ENCODE measurements at regions of chr14 and their contacts with region 1.

Region 1: GRCh38 chr14:74109369-74109768 is 24.6 kb downstream of the LIN52 start:
- DNase-seq: no peak
- H3K4me3 ChIP-seq: no peak overlapping the region
- H3K27ac ChIP-seq: no peak overlapping the region
- H3K4me1 ChIP-seq: no peaks in the 10 kb centered on the region
- H3K27me3 ChIP-seq: no peaks in the 10 kb centered on the region
- CTCF ChIP-seq: no peak

Region 2: DNA sequence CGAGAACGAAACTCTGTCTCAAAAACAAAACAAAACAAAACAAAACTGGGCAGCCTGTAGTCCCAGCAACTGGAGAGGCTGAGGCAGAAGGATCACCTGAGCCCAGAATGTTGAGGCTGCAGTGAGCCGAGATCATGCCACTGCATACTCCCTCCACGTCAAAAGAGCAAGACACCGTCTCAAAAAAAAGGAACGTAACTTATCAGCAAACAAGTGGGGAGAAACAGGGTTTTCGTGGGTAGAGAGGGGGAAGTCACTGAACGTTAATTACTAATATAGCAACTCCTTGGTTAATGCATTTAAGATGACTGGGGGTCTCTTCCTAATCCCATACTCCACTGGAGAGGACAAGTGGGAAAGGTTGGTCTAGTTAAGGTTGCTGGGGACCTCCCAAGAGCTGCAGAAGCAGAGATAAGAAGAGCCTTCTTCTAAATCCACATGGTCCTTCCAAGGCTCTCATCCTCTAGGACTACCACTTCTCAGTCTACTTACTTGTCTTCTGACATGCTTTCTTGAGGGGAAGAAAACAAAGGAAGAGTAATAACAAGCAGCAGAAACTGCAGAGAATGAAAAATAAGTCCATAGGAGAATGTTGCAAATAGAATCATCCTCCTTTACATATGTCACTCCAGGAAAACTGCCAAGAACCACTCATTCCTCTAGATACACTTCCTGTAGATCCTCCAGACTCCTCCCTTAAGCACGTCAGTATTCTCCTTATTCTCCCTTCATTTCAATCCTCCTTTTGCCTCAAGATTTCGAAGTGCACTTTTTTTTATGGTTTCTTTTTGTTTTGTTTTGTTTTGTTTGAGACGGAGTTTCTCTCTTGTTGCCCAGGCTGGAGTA is 656.8 kb before region 1 on chr14:
- CTCF ChIA-PET with region 1: no interaction called
- POLR2A ChIA-PET with region 1: no interaction called
- intact Hi-C with region 1: no loop called
- DNase-seq: no peak
- H3K4me3 ChIP-seq: no peak overlapping the region
- H3K27ac ChIP-seq: no peak overlapping the region
- H3K4me1 ChIP-seq: peaks cover 16% of the 10 kb centered on the region
- H3K27me3 ChIP-seq: no peaks in the 10 kb centered on the region
- CTCF ChIP-seq: no peak

Region 3: GRCh38 chr14:73961192-73961591 is 148.2 kb before region 1 on chr14:
- CTCF ChIA-PET with region 1: no interaction called
- POLR2A ChIA-PET with region 1: no interaction called
- intact Hi-C with region 1: no loop called
- DNase-seq: no peak
- H3K4me3 ChIP-seq: no peak overlapping the region
- H3K27ac ChIP-seq: no peak overlapping the region
- H3K4me1 ChIP-seq: no peaks in the 10 kb centered on the region
- H3K27me3 ChIP-seq: no peaks in the 10 kb centered on the region
- CTCF ChIP-seq: no peak

Region 4: DNA sequence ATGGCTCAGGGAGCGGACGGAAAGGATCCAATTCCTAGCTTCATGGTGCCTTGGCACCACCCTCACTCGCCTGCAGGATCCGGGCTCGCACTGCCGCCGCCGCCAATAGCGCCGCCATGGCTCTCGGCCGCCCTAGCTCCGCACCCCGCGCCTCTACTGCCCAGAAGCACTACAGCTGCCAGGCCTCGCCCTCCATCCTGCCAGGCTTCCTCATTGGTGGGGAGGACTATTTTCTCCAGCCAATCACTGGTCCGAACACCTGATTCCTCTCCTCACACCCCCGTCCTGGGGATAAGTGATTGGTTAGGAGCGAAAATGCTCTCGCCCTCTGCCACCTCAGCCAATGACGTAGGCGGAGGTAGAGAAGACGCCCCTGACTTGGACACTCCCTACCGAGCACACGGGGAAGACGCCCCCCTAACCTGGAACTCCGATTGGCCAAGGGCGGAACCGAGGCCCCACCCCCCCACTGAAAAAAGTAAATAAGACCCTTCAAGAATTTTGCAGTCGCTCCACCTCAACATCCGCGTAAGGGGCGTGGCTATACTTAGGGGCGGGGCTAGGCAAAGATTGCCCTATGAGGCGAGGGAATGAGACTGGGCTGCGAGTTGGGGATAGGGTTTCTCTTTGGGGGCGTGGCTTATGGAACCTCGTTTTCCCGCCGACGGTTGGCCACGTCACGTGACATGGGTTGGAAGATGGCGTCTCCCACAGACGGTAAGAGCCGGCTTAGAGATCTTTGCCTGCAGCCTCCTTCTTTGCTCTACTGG is 24.9 kb before region 1 on chr14 and contains the starts of genes ALDH6A1 and LIN52:
- CTCF ChIA-PET with region 1: no interaction called
- POLR2A ChIA-PET with region 1: interaction called, 10 read pairs
- intact Hi-C with region 1: no loop called
- DNase-seq: peak; percentile 100
- H3K4me3 ChIP-seq: peak within 1 kb of the TSS; percentile 80
- H3K27ac ChIP-seq: peak within 1 kb of the TSS; percentile 63
- H3K4me1 ChIP-seq: peaks cover 21% of the 10 kb centered on the region
- H3K27me3 ChIP-seq: no peaks in the 10 kb centered on the region
- CTCF ChIP-seq: 0 out of 2 replicates have a peak, but pooled peaks have one; percentile 28
- total RNA-seq, gene ALDH6A1: 53.1 and 54.5 TPM in 2 replicates
- total RNA-seq, gene LIN52: 18.8 TPM in 2 replicates

Region 5: DNA sequence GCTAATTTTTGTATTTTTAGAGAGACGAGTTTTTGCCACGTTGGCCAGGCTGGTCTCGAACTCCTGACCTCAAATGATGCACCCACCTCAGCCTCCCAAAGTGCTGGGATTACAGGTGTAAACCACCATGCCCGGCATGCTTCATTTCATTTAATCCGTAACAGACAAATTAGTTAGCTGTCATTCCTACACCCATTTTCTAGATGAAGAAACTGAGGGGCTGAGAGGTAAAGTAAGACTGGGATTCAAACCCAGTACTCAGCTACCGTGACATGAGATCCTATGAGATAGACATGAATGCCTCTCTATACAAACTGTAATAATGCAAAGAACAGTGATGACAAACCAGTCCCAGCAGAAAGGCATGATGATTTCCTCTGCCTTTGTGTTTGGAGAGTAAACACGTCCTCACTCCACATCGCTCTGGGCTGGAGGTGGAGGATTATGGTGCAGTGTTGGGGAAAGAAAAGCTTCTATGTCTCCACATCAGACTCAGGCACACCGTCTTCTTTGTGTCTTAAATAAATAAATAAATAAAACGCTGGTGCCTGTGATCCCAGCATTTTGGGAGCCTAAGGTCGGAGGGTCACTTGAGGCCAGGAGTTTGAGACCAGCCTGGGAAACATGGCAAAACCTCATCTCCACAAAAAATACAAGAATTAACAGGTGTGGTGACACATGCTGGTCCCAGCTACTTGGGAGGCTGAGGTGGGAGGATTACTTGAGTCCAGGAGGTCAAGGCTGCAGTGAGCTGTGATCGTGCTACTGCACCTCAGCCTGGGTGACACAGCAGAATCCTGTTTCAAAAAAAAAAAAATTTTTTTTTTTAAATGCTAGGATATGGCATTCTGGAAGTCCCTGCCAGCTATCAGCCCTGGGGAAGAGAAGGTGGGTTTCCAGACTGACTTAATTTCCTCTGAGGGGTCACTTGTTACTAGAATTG is 140.3 kb after region 1 on chr14:
- CTCF ChIA-PET with region 1: interaction called, 8 read pairs
- POLR2A ChIA-PET with region 1: no interaction called
- intact Hi-C with region 1: loop called (anchors 1 kb)
- DNase-seq: no peak
- H3K4me3 ChIP-seq: no peak overlapping the region
- H3K27ac ChIP-seq: no peak overlapping the region
- H3K4me1 ChIP-seq: no peaks in the 10 kb centered on the region
- H3K27me3 ChIP-seq: peaks cover 4% of the 10 kb centered on the region
- CTCF ChIP-seq: no peak

Region 6: GRCh38 chr14:74362361-74362915 is 253.1 kb after region 1 on chr14:
- CTCF ChIA-PET with region 1: no interaction called
- POLR2A ChIA-PET with region 1: no interaction called
- intact Hi-C with region 1: loop called (anchors 1 kb)
- DNase-seq: peak; percentile 72 to 92
- H3K4me3 ChIP-seq: no peak overlapping the region
- H3K27ac ChIP-seq: no peak overlapping the region
- H3K4me1 ChIP-seq: no peaks in the 10 kb centered on the region
- H3K27me3 ChIP-seq: no peaks in the 10 kb centered on the region
- CTCF ChIP-seq: peak; percentile 100

Region 7: DNA sequence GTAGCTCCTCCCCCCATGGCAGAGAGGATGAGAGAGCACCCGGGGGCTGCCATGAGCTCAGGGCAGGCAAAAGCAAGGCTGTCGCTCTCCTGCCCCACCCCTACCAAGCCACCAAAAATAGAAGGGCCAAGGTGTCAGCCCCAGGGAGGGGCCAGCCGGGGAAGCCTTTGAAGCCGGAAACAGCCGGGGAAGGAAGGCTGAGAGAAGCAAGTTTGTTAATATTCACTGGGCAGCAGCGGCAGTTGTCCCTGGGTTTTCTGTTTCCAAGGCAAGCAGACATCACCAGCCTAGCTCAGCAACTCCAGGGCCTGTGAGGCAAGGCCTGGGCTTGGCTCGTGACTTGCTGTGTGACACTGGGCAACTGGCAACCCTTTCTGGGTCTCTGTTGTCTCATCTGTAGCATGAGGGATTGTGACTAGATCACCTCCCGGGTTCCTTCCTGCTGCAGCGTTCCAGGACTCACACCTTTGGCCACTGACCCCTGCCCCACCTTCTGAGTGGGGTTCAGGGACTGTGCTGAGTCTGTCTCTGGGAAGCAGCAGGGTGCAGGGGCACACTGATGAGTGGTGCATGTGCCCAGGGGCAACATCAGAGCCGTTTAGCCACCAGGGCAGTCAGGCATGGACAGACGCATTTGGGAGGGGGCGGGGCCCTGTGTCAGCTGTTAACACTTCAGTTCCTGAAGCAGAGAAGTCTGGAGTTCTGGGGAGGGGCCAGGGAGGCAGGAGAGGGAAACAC is 292.3 kb after region 1 on chr14:
- CTCF ChIA-PET with region 1: no interaction called
- POLR2A ChIA-PET with region 1: no interaction called
- intact Hi-C with region 1: no loop called
- DNase-seq: peak; percentile 70 to 74
- H3K4me3 ChIP-seq: peak overlapping the region; percentile 52
- H3K27ac ChIP-seq: peak overlapping the region; percentile 76
- H3K4me1 ChIP-seq: peaks cover 32% of the 10 kb centered on the region
- H3K27me3 ChIP-seq: no peaks in the 10 kb centered on the region
- CTCF ChIP-seq: 0 out of 2 replicates have a peak, but pooled peaks have one; percentile 18

Region 8: GRCh38 chr14:74478996-74479635 is 369.7 kb after region 1 on chr14:
- CTCF ChIA-PET with region 1: no interaction called
- POLR2A ChIA-PET with region 1: no interaction called
- intact Hi-C with region 1: loop called (anchors 1 kb)
- DNase-seq: peak in 1 of 2 experiments; percentile 36
- H3K4me3 ChIP-seq: no peak overlapping the region
- H3K27ac ChIP-seq: no peak overlapping the region
- H3K4me1 ChIP-seq: no peaks in the 10 kb centered on the region
- H3K27me3 ChIP-seq: no peaks in the 10 kb centered on the region
- CTCF ChIP-seq: peak; percentile 95

Region 9: GRCh38 chr14:75088574-75089373 is 979.4 kb after region 1 on chr14:
- CTCF ChIA-PET with region 1: no interaction called
- POLR2A ChIA-PET with region 1: no interaction called
- intact Hi-C with region 1: loop called (anchors 10 kb)
- DNase-seq: peak; percentile 59 to 67
- H3K4me3 ChIP-seq: no peak overlapping the region
- H3K27ac ChIP-seq: no peak overlapping the region
- H3K4me1 ChIP-seq: no peaks in the 10 kb centered on the region
- H3K27me3 ChIP-seq: no peaks in the 10 kb centered on the region
- CTCF ChIP-seq: peak; percentile 99